Mammary epithelial cell (primary cell): ENCODE measurements at regions of chr9 and their contacts with region 1.

Region 1: GRCh38 chr9:113578882-113579282 is 115.4 kb downstream of the RGS3 start:
- DNase-seq: peak; percentile 96
- H3K4me3 ChIP-seq: no peak overlapping the region
- H3K27ac ChIP-seq: peak overlapping the region; percentile 30
- H3K4me1 ChIP-seq: peaks cover 84% of the 10 kb centered on the region
- H3K27me3 ChIP-seq: no peaks in the 10 kb centered on the region
- CTCF ChIP-seq: no peak

Region 2: DNA sequence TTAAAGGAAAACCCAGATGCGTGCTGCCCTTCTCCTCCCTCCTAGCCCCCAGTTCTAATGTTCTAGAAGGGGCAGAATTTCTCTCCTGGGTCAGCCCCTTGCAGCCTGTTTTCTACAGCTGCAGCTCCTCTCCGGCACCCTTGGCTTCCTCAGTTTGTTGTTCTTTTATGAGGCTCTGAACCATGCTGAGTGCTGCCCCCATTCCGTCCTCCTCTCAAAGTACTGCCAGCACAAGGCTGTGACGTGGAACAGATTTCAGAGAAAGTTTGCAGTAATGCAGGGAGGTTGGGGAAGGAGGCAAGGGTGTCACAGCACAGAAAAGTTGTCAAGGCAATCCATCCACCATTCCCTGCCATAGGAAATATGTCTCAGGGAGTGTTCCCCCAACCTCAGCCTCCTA is 52.0 kb before region 1 on chr9:
- CTCF ChIA-PET with region 1: no interaction called
- dilution Hi-C with region 1: no loop called
- in situ Hi-C with region 1: no loop called
- intact Hi-C with region 1: no loop called
- DNase-seq: no peak
- H3K4me3 ChIP-seq: no peak overlapping the region
- H3K27ac ChIP-seq: no peak overlapping the region
- H3K4me1 ChIP-seq: peaks cover 3% of the 10 kb centered on the region
- H3K27me3 ChIP-seq: no peaks in the 10 kb centered on the region
- CTCF ChIP-seq: no peak

Region 3: DNA sequence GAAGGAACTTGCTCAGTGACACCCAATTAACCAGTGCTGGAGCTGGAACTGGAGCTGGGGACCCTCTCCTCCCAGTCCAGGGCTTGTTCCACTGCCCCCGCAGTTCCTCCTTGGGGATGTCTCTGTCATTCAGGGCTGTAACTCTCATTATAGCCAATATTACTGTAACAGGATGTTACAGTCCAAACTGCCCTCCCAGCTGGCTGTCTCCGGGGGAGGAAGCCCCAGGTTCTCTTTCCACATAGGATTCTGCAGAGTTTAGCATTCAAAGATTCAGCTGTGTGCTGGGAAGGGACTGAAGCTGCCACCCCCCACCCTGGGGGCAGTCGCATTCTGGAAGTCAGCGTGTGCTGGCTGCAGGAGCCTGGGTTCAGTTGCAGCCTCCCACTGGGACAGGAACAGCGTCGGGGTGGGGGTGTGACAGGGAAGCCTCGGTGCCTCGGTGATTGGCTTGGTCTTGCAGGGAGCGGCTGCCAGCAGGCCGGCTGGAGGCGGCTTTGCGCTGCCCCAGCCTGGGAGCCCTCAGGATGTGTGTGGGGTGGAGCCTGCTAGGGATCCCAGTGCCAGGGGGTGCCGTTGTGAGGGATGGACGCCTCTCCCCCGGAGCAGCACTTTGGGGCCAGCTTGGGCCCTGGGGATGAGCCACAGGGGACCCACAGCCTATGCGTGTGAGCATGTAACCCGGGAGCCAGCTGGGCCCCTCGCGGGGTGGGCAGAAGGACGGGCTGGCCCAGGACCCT is 14.2 kb before region 1 on chr9:
- CTCF ChIA-PET with region 1: interaction called, 3 read pairs
- dilution Hi-C with region 1: no loop called
- in situ Hi-C with region 1: no loop called
- intact Hi-C with region 1: loop called (anchors 2 kb)
- DNase-seq: peak; percentile 85
- H3K4me3 ChIP-seq: peak overlapping the region; percentile 64 to 86 (median 65)
- H3K27ac ChIP-seq: peak overlapping the region; percentile 93
- H3K4me1 ChIP-seq: peaks cover 46% of the 10 kb centered on the region
- H3K27me3 ChIP-seq: no peaks in the 10 kb centered on the region
- CTCF ChIP-seq: no peak

Region 4: DNA sequence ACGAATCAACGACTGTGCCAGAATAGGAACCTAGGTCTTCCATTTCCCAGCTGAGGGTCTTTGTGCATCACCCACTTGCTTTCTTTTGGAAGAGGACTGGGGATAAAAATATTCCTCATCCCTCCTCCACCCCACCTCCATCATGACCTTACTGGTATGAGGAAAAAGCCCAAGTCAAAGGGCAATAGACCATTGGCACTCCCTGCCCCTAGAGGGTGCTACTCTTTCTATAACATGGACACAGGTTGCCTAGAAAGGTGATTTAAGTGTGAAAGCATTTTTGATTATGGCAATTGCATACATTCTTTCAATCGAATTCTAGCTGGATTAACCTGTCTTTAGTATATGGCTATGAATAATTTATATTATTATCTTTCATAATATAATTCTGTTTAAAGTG is 274.4 kb after region 1 on chr9:
- CTCF ChIA-PET with region 1: no interaction called
- dilution Hi-C with region 1: no loop called
- in situ Hi-C with region 1: no loop called
- intact Hi-C with region 1: no loop called
- DNase-seq: no peak
- H3K4me3 ChIP-seq: no peak overlapping the region
- H3K27ac ChIP-seq: no peak overlapping the region
- H3K4me1 ChIP-seq: no peaks in the 10 kb centered on the region
- H3K27me3 ChIP-seq: peaks cover 2% of the 10 kb centered on the region
- CTCF ChIP-seq: peak; percentile 71 to 80

Region 5: GRCh38 chr9:114799441-114799840 is 1220.6 kb after region 1 on chr9:
- CTCF ChIA-PET with region 1: no interaction called
- dilution Hi-C with region 1: no loop called
- in situ Hi-C with region 1: no loop called
- intact Hi-C with region 1: loop called (anchors 10 kb)
- DNase-seq: no peak
- H3K4me3 ChIP-seq: no peak overlapping the region
- H3K27ac ChIP-seq: no peak overlapping the region
- H3K4me1 ChIP-seq: peaks cover 25% of the 10 kb centered on the region
- H3K27me3 ChIP-seq: no peaks in the 10 kb centered on the region
- CTCF ChIP-seq: no peak